KBM-7 (cell line): ENCODE measurements at regions of chr20 and their contacts with region 1.

Region 1: DNA sequence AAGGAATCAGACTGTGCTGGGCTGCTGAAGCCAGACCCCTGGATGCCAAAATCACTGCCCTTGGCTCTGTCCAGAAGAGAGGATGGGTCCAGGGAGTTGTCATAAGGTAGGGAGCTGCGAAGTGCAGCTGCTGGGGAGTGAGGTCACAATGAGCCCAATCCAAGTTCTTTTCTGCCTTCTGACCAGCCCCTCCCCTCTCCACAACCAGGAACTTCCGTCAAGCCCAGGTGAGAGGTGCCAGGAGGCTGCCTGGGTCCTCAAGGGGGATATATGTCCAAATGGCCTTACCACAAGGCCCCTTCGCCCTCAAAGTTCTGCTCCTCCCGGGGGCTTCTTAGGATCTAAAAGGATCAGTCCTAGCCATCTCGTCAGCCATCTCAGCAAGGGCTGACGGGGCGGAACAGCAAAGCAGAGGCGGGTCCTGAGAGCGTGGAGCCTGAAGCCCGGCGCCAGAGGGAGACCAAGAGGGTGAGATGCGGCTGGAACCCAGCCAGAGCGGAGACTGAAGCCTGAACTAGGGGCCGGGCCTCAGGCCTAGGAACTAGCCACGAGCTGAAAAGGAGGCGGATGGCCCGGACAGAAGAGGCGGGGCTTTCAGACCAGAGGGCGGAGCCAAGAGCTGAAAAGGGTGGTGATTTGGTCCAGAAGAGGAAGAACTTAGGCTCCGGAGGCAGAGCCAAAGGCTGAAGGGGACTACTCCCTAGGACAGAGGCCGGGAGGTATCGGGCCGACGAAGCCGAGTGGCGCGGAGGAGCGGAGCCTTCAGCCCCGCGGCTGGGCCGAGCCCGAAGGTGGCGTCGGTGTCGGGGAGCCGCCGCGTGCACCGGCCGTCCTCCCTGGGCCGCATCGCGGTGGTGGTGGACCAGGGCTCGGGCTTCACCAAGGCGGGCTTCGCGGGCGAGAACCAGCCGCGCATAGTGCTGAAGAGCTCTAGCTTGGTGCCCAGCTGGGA is at the start of gene ACTL10:
- DNase-seq: peak; percentile 41

Region 2: DNA sequence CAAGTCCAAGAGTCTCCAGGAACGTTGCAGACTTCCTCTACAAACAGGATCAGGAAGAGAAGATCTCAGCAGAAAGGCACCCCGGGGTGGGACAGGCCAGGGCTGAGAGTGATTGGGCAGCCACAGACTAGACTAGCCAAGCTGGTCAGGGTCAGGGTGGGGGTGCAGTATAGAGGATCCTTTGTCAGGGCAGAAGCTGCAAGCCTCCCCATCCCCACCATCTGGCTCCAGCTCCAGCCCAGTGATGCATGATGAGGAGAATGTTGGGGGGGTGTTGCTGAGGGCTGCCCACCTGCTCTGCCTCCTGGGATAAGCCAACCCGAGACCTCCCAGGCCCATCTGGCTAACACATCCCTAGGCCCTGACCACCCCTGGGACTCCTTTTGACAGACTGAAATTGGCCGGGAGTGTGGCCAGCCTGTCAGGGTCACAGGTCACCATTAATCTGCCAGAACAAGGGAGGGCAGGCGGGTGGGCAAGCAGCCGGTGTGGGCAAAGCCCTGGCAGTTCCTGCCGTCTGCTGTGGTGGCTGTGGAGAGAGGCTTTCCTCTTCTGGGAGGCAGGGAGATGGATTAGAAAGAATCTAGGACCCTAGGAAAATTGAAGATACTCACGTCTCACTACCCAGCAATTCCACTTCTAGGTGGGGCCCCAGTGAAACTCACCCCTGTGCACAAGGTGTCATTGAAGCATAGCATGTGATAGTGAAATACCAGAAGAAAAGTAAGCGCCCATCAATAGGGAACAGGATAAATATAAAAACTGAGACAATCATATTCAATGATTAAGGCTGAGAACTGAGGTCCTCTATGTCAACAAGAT is 200.9 kb before region 1 on chr20:
- in situ Hi-C with region 1: loop called (anchors 25 kb)
- DNase-seq: no peak

Region 3: GRCh38 chr20:33499355-33499754 is 167.2 kb before region 1 on chr20:
- in situ Hi-C with region 1: no loop called
- DNase-seq: no peak

Region 4: GRCh38 chr20:33909331-33909921 is 242.9 kb after region 1 on chr20:
- in situ Hi-C with region 1: no loop called
- DNase-seq: no peak

Region 5: DNA sequence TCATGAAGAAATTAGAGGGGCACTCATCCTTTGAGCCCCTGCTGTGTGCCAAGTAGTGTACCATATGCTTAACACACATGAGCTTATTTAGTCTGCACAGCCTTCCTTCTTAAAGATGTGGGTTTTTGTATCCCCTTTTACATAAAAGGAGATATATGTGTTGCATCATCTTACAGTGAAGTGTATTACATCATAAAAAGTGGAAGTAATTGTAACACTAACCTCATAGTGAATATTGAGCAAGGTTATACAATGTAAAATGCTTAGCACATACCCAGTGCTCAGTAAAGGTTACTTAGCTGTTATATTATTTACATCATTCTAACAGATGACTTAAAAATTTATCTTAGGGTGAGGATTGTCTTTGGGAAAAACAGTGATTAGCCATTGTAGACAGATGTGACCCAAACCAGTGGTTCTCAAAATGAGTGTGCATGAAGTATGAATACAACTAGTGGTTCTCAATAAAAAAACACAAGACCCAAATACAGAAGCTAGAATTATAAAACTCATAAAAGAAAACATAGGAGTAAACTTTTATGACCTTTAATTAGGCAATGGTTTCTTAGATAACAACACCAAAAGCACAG is 1014.1 kb after region 1 on chr20:
- in situ Hi-C with region 1: no loop called
- DNase-seq: peak; percentile 51